Caco-2 (cell line): ENCODE measurements at regions of chr19 and their contacts with region 1.

Region 1: GRCh38 chr19:36054119-36054732 is at the start of gene THAP8:
- DNase-seq: peak; percentile 99 to 100
- H3K4me3 ChIP-seq: peak within 1 kb of the TSS; percentile 61
- H3K4me3 Mint-ChIP-seq: peak within 1 kb of the TSS; percentile 88
- H3K27ac Mint-ChIP-seq: peak within 1 kb of the TSS; percentile 82
- H3K4me1 ChIP-seq: peaks cover 22% of the 10 kb centered on the region; the same call in 1 of the 2 replicates
- H3K4me1 Mint-ChIP-seq: peaks cover 25% of the 10 kb centered on the region
- H3K27me3 ChIP-seq: no peaks in the 10 kb centered on the region
- H3K27me3 Mint-ChIP-seq: no peaks in the 10 kb centered on the region
- CTCF ChIP-seq: peak in 1 of 2 experiments; percentile 43
- total RNA-seq, gene THAP8: 7.6 and 8.8 TPM in 2 replicates

Region 2: DNA sequence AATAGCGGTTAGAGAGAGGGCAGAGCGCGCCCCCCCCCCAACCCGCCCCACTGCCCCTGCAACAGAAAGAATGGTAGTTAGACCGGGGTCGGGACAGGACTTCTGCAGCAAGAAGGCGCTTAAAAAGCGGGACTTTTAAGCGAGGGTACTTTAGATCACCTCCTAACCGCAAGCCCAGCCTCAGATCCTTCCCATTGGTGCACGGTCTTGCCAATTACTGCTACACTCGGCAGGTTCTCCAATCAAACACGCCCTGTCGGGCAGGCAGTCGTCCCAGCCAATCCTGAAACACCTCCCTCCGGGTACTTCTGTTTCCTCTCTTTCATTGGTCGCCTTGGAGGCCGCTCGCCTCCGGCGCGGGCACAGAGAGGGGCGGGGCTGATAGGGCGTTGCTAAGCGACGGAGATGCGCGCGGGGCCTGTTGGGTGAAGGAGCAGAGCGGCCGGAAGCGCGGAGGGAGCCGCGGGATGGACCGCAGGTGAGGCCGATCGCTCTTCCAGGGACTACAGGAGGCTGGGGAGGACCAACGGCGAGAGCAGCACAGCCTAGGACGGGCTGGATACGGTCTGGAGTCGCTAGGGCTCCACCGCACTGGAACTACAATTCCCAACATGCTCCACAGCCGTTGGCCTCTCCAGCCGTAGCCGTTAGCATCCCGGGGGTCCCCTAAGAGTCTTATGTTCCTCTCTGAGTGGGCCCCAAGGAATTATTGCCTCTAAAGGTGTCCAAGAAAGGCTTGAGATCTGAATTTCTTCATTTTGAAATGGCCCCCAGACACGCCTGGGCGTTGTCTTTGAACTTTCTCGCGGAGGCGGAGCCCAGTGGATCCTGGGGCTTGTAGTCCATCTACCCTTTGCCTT is 296.2 kb before region 1 on chr19 and contains the start of gene PROSER3:
- CTCF ChIA-PET with region 1: no interaction called
- POLR2A ChIA-PET with region 1: no interaction called
- intact Hi-C with region 1: loop called (anchors 2 kb)
- DNase-seq: peak; percentile 99 to 100
- H3K4me3 ChIP-seq: peak within 1 kb of the TSS; percentile 68
- H3K4me3 Mint-ChIP-seq: peak within 1 kb of the TSS; percentile 88
- H3K27ac Mint-ChIP-seq: peak within 1 kb of the TSS; percentile 92
- H3K4me1 ChIP-seq: peaks cover 6% of the 10 kb centered on the region
- H3K4me1 Mint-ChIP-seq: peaks cover 6% of the 10 kb centered on the region
- H3K27me3 ChIP-seq: no peaks in the 10 kb centered on the region
- H3K27me3 Mint-ChIP-seq: no peaks in the 10 kb centered on the region
- CTCF ChIP-seq: no peak
- total RNA-seq, gene PROSER3: 34.6 and 37.0 TPM in 2 replicates

Region 3: GRCh38 chr19:35913589-35913988 is 140.6 kb before region 1 on chr19:
- CTCF ChIA-PET with region 1: no interaction called
- POLR2A ChIA-PET with region 1: no interaction called
- intact Hi-C with region 1: no loop called
- DNase-seq: no peak
- H3K4me3 ChIP-seq: no peak overlapping the region
- H3K4me3 Mint-ChIP-seq: no peak overlapping the region
- H3K27ac Mint-ChIP-seq: no peak overlapping the region
- H3K4me1 ChIP-seq: no peaks in the 10 kb centered on the region
- H3K4me1 Mint-ChIP-seq: no peaks in the 10 kb centered on the region
- H3K27me3 ChIP-seq: 0 out of 2 replicates have a peak, but pooled peaks cover 1% of the 10 kb centered on the region
- H3K27me3 Mint-ChIP-seq: peaks cover 7% of the 10 kb centered on the region
- CTCF ChIP-seq: no peak

Region 4: GRCh38 chr19:36009220-36009619 is 45.0 kb before region 1 on chr19:
- CTCF ChIA-PET with region 1: interaction called, 6 read pairs
- POLR2A ChIA-PET with region 1: interaction called, 14 read pairs
- intact Hi-C with region 1: loop called (anchors 1 kb)
- DNase-seq: peak; percentile 65 to 75
- H3K4me3 ChIP-seq: peak overlapping the region; percentile 75
- H3K4me3 Mint-ChIP-seq: peak overlapping the region; percentile 89
- H3K27ac Mint-ChIP-seq: peak overlapping the region; percentile 89
- H3K4me1 ChIP-seq: peaks cover 5% of the 10 kb centered on the region; the same call in 1 of the 2 replicates
- H3K4me1 Mint-ChIP-seq: peaks cover 24% of the 10 kb centered on the region
- H3K27me3 ChIP-seq: no peaks in the 10 kb centered on the region
- H3K27me3 Mint-ChIP-seq: no peaks in the 10 kb centered on the region
- CTCF ChIP-seq: peak in 1 of 2 experiments; percentile 0

Region 5: DNA sequence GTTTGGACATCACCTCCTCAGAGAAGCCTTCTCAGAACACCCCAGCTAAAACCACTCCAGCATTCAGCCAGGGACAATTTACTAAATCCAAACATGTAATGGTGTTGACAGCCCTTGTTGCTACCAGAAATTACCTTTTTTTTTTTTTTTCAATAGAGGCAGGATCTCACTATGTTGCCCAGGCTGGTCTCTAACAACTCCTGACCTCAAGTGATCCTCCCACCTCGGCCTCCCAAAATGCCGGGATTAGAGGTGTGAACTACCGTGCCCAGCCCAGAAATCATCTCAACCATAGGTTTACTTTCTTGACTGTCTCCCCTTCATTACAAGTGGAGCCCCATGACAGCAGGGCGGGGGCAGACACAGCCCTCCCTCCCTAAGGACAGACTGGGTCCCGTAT is 30.8 kb before region 1 on chr19:
- CTCF ChIA-PET with region 1: no interaction called
- POLR2A ChIA-PET with region 1: no interaction called
- intact Hi-C with region 1: no loop called
- DNase-seq: no peak
- H3K4me3 ChIP-seq: no peak overlapping the region
- H3K4me3 Mint-ChIP-seq: no peak overlapping the region
- H3K27ac Mint-ChIP-seq: no peak overlapping the region
- H3K4me1 ChIP-seq: no peaks in the 10 kb centered on the region
- H3K4me1 Mint-ChIP-seq: no peaks in the 10 kb centered on the region
- H3K27me3 ChIP-seq: no peaks in the 10 kb centered on the region
- H3K27me3 Mint-ChIP-seq: no peaks in the 10 kb centered on the region
- CTCF ChIP-seq: no peak

Region 6: GRCh38 chr19:36041831-36042230 is 12.4 kb before region 1 on chr19:
- CTCF ChIA-PET with region 1: interaction called, 3 read pairs
- POLR2A ChIA-PET with region 1: interaction called, 15 read pairs
- intact Hi-C with region 1: loop called (anchors 1 kb)
- DNase-seq: peak; percentile 75 to 81
- H3K4me3 ChIP-seq: no peak overlapping the region
- H3K4me3 Mint-ChIP-seq: peak overlapping the region; percentile 35
- H3K27ac Mint-ChIP-seq: peak overlapping the region; percentile 91
- H3K4me1 ChIP-seq: peaks cover 22% of the 10 kb centered on the region
- H3K4me1 Mint-ChIP-seq: peaks cover 29% of the 10 kb centered on the region
- H3K27me3 ChIP-seq: no peaks in the 10 kb centered on the region
- H3K27me3 Mint-ChIP-seq: no peaks in the 10 kb centered on the region
- CTCF ChIP-seq: no peak

Region 7: GRCh38 chr19:36214386-36215275 is 160.4 kb after region 1 on chr19 and contains the starts of genes ZNF146 and ZNF565:
- CTCF ChIA-PET with region 1: no interaction called
- POLR2A ChIA-PET with region 1: no interaction called
- intact Hi-C with region 1: loop called (anchors 1 kb)
- DNase-seq: peak; percentile 98 to 99
- H3K4me3 ChIP-seq: peak within 1 kb of the TSS; percentile 79
- H3K4me3 Mint-ChIP-seq: no peak within 1 kb of the TSS
- H3K27ac Mint-ChIP-seq: no peak within 1 kb of the TSS
- H3K4me1 ChIP-seq: no peaks in the 10 kb centered on the region
- H3K4me1 Mint-ChIP-seq: no peaks in the 10 kb centered on the region
- H3K27me3 ChIP-seq: no peaks in the 10 kb centered on the region
- H3K27me3 Mint-ChIP-seq: no peaks in the 10 kb centered on the region
- CTCF ChIP-seq: no peak
- total RNA-seq, gene ZNF146: 76.1 and 76.4 TPM in 2 replicates
- total RNA-seq, gene ZNF565: 3.8 and 4.1 TPM in 2 replicates